ENCODE measurements at regions of chr5 and their contacts with region 1.

Region 1: DNA sequence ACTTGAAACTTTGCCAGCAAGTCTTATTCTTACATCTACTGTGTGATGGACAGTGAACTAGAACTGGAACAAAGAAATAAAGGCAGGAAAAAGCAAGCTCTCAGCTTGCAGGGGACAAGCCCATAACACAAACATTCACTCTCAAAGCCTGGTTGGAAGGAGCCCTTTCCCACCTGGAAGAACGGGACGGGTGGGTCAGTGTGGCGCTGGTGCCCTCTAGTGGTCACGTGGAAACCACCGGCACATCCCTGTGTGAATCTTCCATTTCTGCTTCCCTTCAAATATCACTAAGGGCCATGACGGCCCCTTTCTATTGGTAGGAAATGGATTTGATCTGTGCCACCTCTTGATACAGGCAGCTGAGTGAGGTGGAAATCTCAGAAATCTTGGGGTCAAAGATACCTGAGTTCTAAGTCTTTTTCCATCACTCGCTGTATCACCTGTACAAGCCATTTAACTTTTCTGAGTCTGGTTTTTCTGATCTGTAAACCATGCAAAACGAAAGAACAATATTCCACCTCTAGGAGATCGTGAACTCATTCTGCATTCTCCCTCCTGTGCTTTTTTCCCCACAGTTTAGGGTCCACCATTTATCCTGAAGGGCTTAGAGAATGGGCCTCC is 211.6 kb downstream of the MSX2 start:
- DNase-seq: no peak
- H3K4me3 Mint-ChIP-seq: no peak overlapping the region
- H3K27ac Mint-ChIP-seq: no peak overlapping the region
- H3K4me1 Mint-ChIP-seq: no peaks in the 10 kb centered on the region
- H3K27me3 Mint-ChIP-seq: peaks cover 1% of the 10 kb centered on the region

Region 2: DNA sequence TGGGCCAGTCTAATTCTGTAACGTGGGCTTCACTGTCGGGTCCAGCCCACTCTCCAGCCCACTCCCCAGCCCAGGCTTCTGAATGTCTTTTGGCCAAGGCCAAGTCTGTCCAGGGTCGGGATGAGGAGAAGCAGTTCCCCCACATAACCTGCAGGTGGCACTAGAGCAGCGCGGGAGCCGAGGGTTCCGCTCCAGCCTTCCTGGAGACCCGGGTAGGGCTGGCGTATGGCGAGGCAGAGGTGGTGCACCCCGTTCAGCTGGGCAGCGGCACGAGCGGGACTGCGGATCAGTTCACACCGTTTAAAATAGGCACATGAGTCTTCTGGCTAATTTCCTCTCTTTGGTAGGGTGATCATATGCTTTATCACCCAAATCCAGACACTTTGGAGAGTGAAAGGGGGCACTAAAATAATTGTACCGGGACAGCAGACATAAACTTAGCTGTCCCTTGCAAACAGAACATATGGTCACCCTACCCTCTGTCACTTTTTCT is 25.7 kb before region 1 on chr5:
- intact Hi-C with region 1: loop called (anchors 1 kb)
- DNase-seq: peak; percentile 32
- H3K4me3 Mint-ChIP-seq: no peak overlapping the region
- H3K27ac Mint-ChIP-seq: no peak overlapping the region
- H3K4me1 Mint-ChIP-seq: peaks cover 6% of the 10 kb centered on the region
- H3K27me3 Mint-ChIP-seq: peaks cover 13% of the 10 kb centered on the region

Region 3: GRCh38 chr5:175261090-175261489 is 325.1 kb after region 1 on chr5:
- intact Hi-C with region 1: no loop called
- DNase-seq: no peak
- H3K4me3 Mint-ChIP-seq: no peak overlapping the region
- H3K27ac Mint-ChIP-seq: no peak overlapping the region
- H3K4me1 Mint-ChIP-seq: no peaks in the 10 kb centered on the region
- H3K27me3 Mint-ChIP-seq: no peaks in the 10 kb centered on the region

Measured in activated T-helper 1 cell treated with anti-CD3 and anti-CD28 coated beads, Interleukin-12 subunit alpha, Interleukin-12 subunit beta, Interleukin-2, Interleukin-4 antibody, amounts not matched to agents 30 ng/mL and 10 ng/mL and 1 ng/mL, durations not matched to agents 14 hours and 24 hours and 36 hours (primary cell).